Prostate gland (tissue), 2 donors: ENCODE measurements at regions of chr1 and their contacts with region 1.

Region 1: DNA sequence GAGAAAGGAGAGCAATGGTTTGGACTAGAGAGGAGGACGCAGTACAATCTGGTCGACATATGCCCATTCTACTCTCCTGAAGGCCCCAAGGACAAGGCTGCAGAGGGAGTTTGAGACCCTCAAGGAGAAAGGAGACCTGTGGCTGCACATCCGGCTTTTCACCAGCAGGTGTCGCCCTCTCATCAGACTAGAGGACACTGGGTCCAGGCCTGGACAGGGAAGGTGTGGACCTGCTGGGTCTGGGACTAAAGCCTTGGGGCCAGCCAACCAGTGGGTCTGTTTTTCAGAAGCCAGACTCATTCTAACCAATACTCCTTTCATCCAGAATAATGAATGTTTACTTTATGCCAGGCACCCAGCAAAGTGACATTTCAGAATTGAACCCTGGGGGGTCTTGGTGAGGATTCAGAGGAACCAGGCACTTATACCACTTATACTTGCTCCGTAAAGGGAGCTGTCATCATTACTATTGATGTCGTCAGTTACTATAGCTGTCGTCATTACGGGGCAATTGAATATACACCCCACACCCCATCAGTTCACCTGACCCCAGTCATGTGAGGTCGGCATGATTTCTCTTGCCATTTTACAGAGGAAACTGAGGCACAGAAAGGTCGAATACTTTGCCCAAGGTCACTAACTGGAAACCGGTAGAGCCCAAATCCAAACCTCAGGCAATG is 5.1 kb downstream of the SRARP start:
- DNase-seq: peak; percentile 73
- H3K4me3 ChIP-seq: no peak overlapping the region
- H3K27ac ChIP-seq: no peak overlapping the region
- H3K4me1 ChIP-seq: peaks cover 3% of the 10 kb centered on the region
- H3K27me3 ChIP-seq: no peaks in the 10 kb centered on the region
- CTCF ChIP-seq: peak; percentile 95 to 99 (median 97)
- POLR2A ChIP-seq: no peak

Region 2: GRCh38 chr1:16032388-16033103 is 23.4 kb after region 1 on chr1:
- intact Hi-C with region 1: loop called (anchors 1 kb)
- DNase-seq: peak; percentile 73
- H3K4me3 ChIP-seq: no peak overlapping the region
- H3K27ac ChIP-seq: no peak overlapping the region
- H3K4me1 ChIP-seq: no peaks in the 10 kb centered on the region
- H3K27me3 ChIP-seq: no peaks in the 10 kb centered on the region
- CTCF ChIP-seq: peak; percentile 76 to 99 (median 88)
- POLR2A ChIP-seq: no peak

Region 3: GRCh38 chr1:16055613-16056520 is 46.7 kb after region 1 on chr1:
- intact Hi-C with region 1: loop called (anchors 5 kb)
- DNase-seq: peak; percentile 79
- H3K4me3 ChIP-seq: no peak overlapping the region
- H3K27ac ChIP-seq: no peak overlapping the region
- H3K4me1 ChIP-seq: no peaks in the 10 kb centered on the region
- H3K27me3 ChIP-seq: no peaks in the 10 kb centered on the region
- CTCF ChIP-seq: peak; percentile 71 to 98 (median 93)
- POLR2A ChIP-seq: no peak